ENCODE measurements at regions of chr15 and their contacts with region 1.

Region 1: GRCh38 chr15:71443538-71443937 is 328.3 kb downstream of the THSD4 start:
- DNase-seq: peak; percentile 58
- ATAC-seq: no peak
- H3K4me3 Mint-ChIP-seq: no peak overlapping the region
- H3K27ac Mint-ChIP-seq: no peak overlapping the region
- H3K4me1 Mint-ChIP-seq: no peaks in the 10 kb centered on the region
- H3K27me3 Mint-ChIP-seq: peaks cover 10% of the 10 kb centered on the region
- CTCF ChIP-seq: peak; percentile 88

Region 2: GRCh38 chr15:71114896-71115554 is 328.5 kb before region 1 on chr15 and contains the start of gene THSD4:
- CTCF ChIA-PET with region 1: interaction called, 4 read pairs
- POLR2A ChIA-PET with region 1: no interaction called
- intact Hi-C with region 1: loop called (anchors 5 kb)
- DNase-seq: peak; percentile 73
- ATAC-seq: peak; percentile 94
- H3K4me3 Mint-ChIP-seq: peak within 1 kb of the TSS; percentile 56
- H3K27ac Mint-ChIP-seq: no peak within 1 kb of the TSS
- H3K4me1 Mint-ChIP-seq: peaks cover 6% of the 10 kb centered on the region
- H3K27me3 Mint-ChIP-seq: peaks cover 47% of the 10 kb centered on the region
- CTCF ChIP-seq: peak; percentile 91
- total RNA-seq, gene THSD4: not detected

Region 3: GRCh38 chr15:71386448-71387236 is 56.9 kb before region 1 on chr15:
- CTCF ChIA-PET with region 1: interaction called, 7 read pairs
- POLR2A ChIA-PET with region 1: no interaction called
- intact Hi-C with region 1: loop called (anchors 5 kb)
- DNase-seq: no peak
- ATAC-seq: no peak
- H3K4me3 Mint-ChIP-seq: no peak overlapping the region
- H3K27ac Mint-ChIP-seq: no peak overlapping the region
- H3K4me1 Mint-ChIP-seq: peaks cover 2% of the 10 kb centered on the region
- H3K27me3 Mint-ChIP-seq: peaks cover 21% of the 10 kb centered on the region
- CTCF ChIP-seq: peak; percentile 63

Measured in activated CD8-positive, alpha-beta T cell treated with anti-CD3 and anti-CD28 coated beads for 36 hours (primary cell).